Esophagus muscularis mucosa (tissue), 4 donors: ENCODE measurements at regions of chr9 and their contacts with region 1.

Region 1: GRCh38 chr9:1939926-1940368 is 75.2 kb upstream of the SMARCA2 start:
- DNase-seq: no peak
- H3K4me3 ChIP-seq: no peak overlapping the region
- H3K27ac ChIP-seq: no peak overlapping the region
- H3K4me1 ChIP-seq: no peaks in the 10 kb centered on the region
- H3K27me3 ChIP-seq: no peaks in the 10 kb centered on the region
- CTCF ChIP-seq: peak in 2 of 3 experiments; percentile 26 to 56
- EP300 ChIP-seq: no peak
- POLR2A ChIP-seq: no peak

Region 2: DNA sequence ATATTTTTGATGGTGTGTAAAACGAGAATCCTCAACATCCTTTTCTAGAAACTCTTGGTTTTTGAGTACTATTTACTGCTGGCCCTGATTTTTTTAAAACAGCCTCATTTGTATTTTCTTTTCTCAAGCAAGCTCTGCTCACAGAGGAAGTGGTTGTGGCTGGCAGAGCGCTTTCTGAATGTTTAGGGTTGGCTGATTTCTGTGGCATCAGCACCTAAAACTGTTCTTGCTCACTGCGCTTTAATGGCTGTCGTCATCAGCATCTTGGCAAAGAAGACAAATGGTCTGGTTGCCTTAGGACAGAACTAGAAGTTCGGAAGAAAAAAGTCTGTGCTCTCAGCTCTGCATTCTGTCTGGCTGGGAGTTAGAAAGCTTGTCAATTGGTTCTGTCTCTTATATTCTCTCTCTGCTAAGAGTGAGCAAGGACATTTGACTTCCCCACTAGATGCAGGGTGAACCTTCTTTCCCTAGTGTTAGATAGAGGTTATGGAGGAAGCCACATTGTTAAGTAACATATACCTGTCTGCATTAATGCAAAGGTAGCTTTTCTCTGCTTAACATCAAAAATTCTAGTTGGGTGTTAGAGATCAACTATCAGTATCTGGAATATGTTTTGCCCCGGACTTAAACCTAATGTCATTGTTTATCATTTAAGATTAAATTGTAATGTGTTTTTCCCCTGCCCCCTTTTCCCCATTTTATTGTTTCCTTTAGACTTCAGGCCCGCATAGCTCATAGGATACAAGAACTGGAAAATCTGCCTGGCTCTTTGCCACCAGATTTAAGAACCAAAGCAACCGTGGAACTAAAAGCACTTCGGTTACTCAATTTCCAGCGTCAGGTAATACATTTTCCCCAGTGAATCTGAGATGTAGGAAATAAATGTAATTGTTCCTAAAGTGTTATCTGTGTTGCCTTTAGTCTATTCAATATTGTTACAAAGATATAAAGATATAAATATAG is 114.2 kb after region 1 on chr9:
- intact Hi-C with region 1: loop called (anchors 10 kb)
- DNase-seq: no peak
- H3K4me3 ChIP-seq: no peak overlapping the region
- H3K27ac ChIP-seq: peak overlapping the region; percentile 39 to 67 (median 63)
- H3K4me1 ChIP-seq: peaks cover 1 to 49% (median 43%) of the 10 kb centered on the region in 4 donors
- H3K27me3 ChIP-seq: no peaks in the 10 kb centered on the region
- CTCF ChIP-seq: no peak
- EP300 ChIP-seq: no peak
- POLR2A ChIP-seq: no peak